ENCODE measurements at regions of chr19 and their contacts with region 1.

Region 1: GRCh38 chr19:50461066-50461875 is 15.0 kb upstream of the EMC10 start:
- DNase-seq: peak; percentile 77
- ATAC-seq: peak; percentile 72
- H3K4me3 Mint-ChIP-seq: no peak overlapping the region
- H3K27ac Mint-ChIP-seq: no peak overlapping the region
- H3K4me1 Mint-ChIP-seq: peaks cover 6% of the 10 kb centered on the region
- H3K27me3 Mint-ChIP-seq: no peaks in the 10 kb centered on the region; the same call in 1 of the 2 replicates
- CTCF ChIP-seq: peak; percentile 72

Region 2: GRCh38 chr19:50368649-50369570 is 92.4 kb before region 1 on chr19:
- CTCF ChIA-PET with region 1: interaction called, 35 read pairs
- POLR2A ChIA-PET with region 1: interaction called, 4 read pairs
- DNase-seq: peak; percentile 92
- ATAC-seq: peak; percentile 86
- H3K4me3 Mint-ChIP-seq: peak overlapping the region; percentile 88
- H3K27ac Mint-ChIP-seq: peak overlapping the region; percentile 96
- H3K4me1 Mint-ChIP-seq: peaks cover 2% of the 10 kb centered on the region; the same call in 1 of the 2 replicates
- H3K27me3 Mint-ChIP-seq: peaks cover 5% of the 10 kb centered on the region
- CTCF ChIP-seq: peak; percentile 83

Region 3: DNA sequence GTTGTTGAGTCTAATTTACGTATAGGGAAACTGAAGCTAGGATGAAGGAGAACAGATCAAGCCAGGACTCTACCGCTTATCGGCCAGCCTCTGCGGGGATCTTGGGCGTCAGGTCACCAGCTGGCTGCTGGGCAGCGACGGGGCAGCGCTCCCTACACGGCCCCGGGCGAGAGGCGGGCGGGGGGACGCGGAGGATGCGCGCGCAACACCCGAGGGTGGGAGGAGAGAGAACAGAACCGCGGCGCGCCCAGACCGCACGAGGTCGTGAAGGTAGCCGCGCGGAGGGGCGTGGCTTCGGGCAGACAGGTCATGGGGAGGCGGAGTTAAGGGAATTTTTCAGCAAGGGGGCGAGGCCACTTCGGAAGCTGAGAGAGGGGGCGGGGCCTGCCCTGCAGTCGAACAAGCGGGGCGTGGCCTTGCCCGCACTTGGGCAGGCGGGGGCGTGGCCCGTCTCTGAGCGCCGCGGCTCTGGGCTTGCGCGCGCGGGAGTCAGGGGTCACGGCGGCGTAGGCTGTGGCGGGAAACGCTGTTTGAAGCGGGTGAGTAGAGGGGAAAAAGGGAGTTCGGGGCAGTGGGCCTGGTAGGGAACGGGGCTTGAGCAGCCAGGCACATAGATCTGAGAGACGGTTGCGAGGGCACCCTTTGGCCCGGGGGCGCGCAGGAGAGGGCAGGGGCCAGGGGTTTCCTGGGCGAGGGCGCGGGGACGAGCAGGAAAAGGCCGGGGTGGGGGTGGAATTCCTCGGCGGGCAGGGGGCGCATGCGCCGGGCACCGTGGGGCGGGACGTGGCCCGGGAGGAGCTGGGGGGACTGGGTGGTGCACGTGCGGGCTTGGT is 77.2 kb before region 1 on chr19 and contains the start of gene POLD1:
- CTCF ChIA-PET with region 1: interaction called, 16 read pairs
- POLR2A ChIA-PET with region 1: interaction called, 4 read pairs
- DNase-seq: peak; percentile 99
- ATAC-seq: peak; percentile 90
- H3K4me3 Mint-ChIP-seq: peak within 1 kb of the TSS; percentile 92
- H3K27ac Mint-ChIP-seq: peak within 1 kb of the TSS; percentile 91
- H3K4me1 Mint-ChIP-seq: peaks cover 21% of the 10 kb centered on the region
- H3K27me3 Mint-ChIP-seq: no peaks in the 10 kb centered on the region
- CTCF ChIP-seq: no peak
- total RNA-seq, gene POLD1: 163 to 179 TPM (median 178 TPM) in 3 replicates

Region 4: GRCh38 chr19:50427997-50428425 is 33.3 kb before region 1 on chr19:
- CTCF ChIA-PET with region 1: interaction called, 12 read pairs
- POLR2A ChIA-PET with region 1: no interaction called
- DNase-seq: peak; percentile 81
- ATAC-seq: peak; percentile 31
- H3K4me3 Mint-ChIP-seq: peak overlapping the region; percentile 47
- H3K27ac Mint-ChIP-seq: no peak overlapping the region
- H3K4me1 Mint-ChIP-seq: peaks cover 21% of the 10 kb centered on the region
- H3K27me3 Mint-ChIP-seq: peaks cover 35% of the 10 kb centered on the region
- CTCF ChIP-seq: no peak

Region 5: GRCh38 chr19:50486823-50487511 is 25.7 kb after region 1 on chr19:
- CTCF ChIA-PET with region 1: interaction called, 33 read pairs
- POLR2A ChIA-PET with region 1: no interaction called
- DNase-seq: peak; percentile 93
- ATAC-seq: peak; percentile 60
- H3K4me3 Mint-ChIP-seq: no peak overlapping the region
- H3K27ac Mint-ChIP-seq: no peak overlapping the region
- H3K4me1 Mint-ChIP-seq: peaks cover 35% of the 10 kb centered on the region
- H3K27me3 Mint-ChIP-seq: peaks cover 71% of the 10 kb centered on the region
- CTCF ChIP-seq: peak; percentile 93